ENCODE measurements at regions of chr18 and their contacts with region 1.

Region 1: GRCh38 chr18:11733031-11733430 is 44.0 kb downstream of the GNAL start:
- DNase-seq: peak; percentile 57
- ATAC-seq: peak; percentile 99
- H3K4me3 ChIP-seq: peak overlapping the region; percentile 39
- H3K27ac ChIP-seq: no peak overlapping the region
- H3K4me1 ChIP-seq: no peaks in the 10 kb centered on the region
- H3K27me3 ChIP-seq: peaks cover 27% of the 10 kb centered on the region
- CTCF ChIP-seq: peak; percentile 91
- POLR2A ChIP-seq: no peak
- RAD21 ChIP-seq: peak; percentile 94

Region 2: DNA sequence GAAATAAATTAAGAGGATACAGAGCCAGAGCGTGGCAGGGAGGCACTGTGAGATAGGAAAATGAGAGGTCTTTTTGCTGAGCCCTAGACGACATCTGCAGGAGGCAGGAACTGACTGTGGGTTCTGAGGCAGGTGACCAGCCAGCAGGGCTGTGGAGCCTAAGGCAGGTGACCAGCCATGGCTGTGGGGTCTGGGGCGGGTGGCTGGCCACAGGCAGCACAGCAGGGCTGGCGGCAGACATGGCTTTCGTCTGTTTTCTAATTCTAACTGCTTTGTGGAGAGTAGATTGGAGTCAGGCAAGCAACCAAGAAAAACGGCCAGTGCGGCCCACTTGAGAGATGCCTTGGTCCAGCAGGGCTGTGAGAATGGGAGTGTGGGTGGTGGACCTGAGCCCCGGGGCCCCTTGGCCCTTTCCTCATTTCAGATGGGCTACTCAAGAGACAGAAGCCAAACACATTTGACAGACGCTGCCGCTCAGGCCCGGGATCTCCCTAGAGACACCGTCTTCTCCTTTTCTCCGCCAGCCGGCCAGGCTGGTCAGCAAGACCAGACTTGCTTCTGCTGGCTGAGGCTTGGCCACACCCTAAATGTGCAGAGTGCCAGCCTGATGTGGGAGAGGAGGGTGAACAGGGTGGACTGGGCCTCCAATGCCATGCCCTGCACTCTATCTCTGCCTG is 63.6 kb before region 1 on chr18:
- CTCF ChIA-PET with region 1: no interaction called
- POLR2A ChIA-PET with region 1: no interaction called
- dilution Hi-C with region 1: no loop called
- in situ Hi-C with region 1: no loop called
- intact Hi-C with region 1: no loop called
- DNase-seq: no peak
- ATAC-seq: no peak
- H3K4me3 ChIP-seq: no peak overlapping the region
- H3K27ac ChIP-seq: no peak overlapping the region
- H3K4me1 ChIP-seq: no peaks in the 10 kb centered on the region
- H3K27me3 ChIP-seq: peaks cover 40% of the 10 kb centered on the region
- CTCF ChIP-seq: no peak
- POLR2A ChIP-seq: no peak
- RAD21 ChIP-seq: no peak

Region 3: DNA sequence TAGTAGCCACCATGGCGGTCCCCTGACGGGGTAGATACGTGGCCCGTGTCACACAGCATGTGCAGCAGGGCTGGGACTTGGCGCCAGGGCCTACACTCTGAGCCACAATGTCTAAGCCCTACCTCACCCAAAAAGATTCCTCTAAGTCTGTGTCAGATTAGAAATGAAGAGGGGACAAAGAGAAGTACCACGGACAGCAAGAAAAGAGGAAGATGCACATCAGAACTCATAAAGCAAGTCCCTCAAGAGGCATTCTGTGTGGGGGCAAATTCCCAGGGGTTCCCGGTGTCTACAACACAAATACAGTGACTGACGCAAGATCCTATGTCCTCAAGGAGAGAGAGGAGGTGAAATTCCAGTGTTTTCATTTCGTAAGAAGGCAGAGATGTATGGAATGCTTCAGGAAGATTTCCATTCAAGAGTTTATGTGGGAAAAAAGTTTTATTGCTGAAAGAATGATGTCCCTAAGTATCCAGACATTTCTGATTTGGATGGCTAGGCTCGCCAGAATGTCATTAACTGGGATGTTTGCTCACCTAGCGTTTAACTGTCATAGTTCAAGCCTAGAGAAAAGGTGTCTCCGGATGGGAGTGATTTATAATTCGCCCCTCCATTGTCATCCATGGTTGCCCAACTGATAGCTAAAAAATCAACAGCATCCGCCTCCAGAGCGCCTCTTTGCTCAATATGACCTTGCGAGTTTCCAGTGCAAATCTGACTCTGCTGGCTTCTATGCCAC is 42.6 kb after region 1 on chr18:
- CTCF ChIA-PET with region 1: no interaction called
- POLR2A ChIA-PET with region 1: no interaction called
- dilution Hi-C with region 1: no loop called
- in situ Hi-C with region 1: no loop called
- intact Hi-C with region 1: no loop called
- DNase-seq: no peak
- ATAC-seq: no peak
- H3K4me3 ChIP-seq: no peak overlapping the region
- H3K27ac ChIP-seq: no peak overlapping the region
- H3K4me1 ChIP-seq: no peaks in the 10 kb centered on the region
- H3K27me3 ChIP-seq: peaks cover 13% of the 10 kb centered on the region
- CTCF ChIP-seq: no peak
- POLR2A ChIP-seq: no peak
- RAD21 ChIP-seq: no peak

Region 4: DNA sequence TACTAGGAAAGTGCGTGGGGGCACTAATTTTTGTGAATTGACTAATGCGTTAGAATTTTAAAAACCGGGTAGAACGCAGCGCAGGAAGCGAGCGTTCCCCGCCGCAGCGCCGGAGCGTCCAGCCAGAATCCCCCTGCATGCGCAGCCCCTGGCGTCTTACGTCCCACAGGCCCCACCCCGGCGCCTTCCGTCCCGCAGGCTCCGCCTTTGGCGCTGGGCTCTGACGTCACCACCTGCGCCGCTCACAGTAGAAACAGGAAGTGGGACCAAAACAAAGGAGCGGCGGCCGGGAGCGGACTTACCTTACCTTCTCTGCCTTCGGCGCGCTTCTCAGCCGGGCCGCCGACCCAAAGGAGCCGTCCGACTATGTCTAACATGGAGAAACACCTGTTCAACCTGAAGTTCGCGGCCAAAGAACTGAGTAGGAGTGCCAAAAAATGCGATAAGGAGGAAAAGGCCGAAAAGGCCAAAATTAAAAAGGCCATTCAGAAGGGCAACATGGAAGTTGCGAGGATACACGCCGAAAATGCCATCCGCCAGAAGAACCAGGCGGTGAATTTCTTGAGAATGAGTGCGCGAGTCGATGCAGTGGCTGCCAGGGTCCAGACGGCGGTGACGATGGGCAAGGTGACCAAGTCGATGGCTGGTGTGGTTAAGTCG is 118.2 kb after region 1 on chr18 and contains the start of gene CHMP1B:
- CTCF ChIA-PET with region 1: interaction called, 3 read pairs
- POLR2A ChIA-PET with region 1: no interaction called
- dilution Hi-C with region 1: no loop called
- in situ Hi-C with region 1: no loop called
- intact Hi-C with region 1: loop called (anchors 2 kb)
- DNase-seq: peak; percentile 98
- ATAC-seq: peak; percentile 96
- H3K4me3 ChIP-seq: peak within 1 kb of the TSS; percentile 83
- H3K27ac ChIP-seq: peak within 1 kb of the TSS; percentile 84
- H3K4me1 ChIP-seq: peaks cover 10% of the 10 kb centered on the region
- H3K27me3 ChIP-seq: no peaks in the 10 kb centered on the region
- CTCF ChIP-seq: no peak
- POLR2A ChIP-seq: peak; percentile 95
- RAD21 ChIP-seq: peak; percentile 6; the same call in 1 of the 2 replicates
- total RNA-seq, gene CHMP1B: 39.4 and 69.7 TPM in 2 replicates

Region 5: GRCh38 chr18:11908182-11909060 is 175.4 kb after region 1 on chr18 and contains the start of gene MPPE1:
- CTCF ChIA-PET with region 1: no interaction called
- POLR2A ChIA-PET with region 1: no interaction called
- dilution Hi-C with region 1: no loop called
- in situ Hi-C with region 1: no loop called
- intact Hi-C with region 1: loop called (anchors 2 kb)
- DNase-seq: peak; percentile 83
- ATAC-seq: peak; percentile 93
- H3K4me3 ChIP-seq: peak within 1 kb of the TSS; percentile 86
- H3K27ac ChIP-seq: peak within 1 kb of the TSS; percentile 83
- H3K4me1 ChIP-seq: peaks cover 6% of the 10 kb centered on the region
- H3K27me3 ChIP-seq: no peaks in the 10 kb centered on the region
- CTCF ChIP-seq: no peak
- POLR2A ChIP-seq: peak; percentile 86
- RAD21 ChIP-seq: no peak
- total RNA-seq, gene MPPE1: 13.8 and 22.5 TPM in 2 replicates

Region 6: DNA sequence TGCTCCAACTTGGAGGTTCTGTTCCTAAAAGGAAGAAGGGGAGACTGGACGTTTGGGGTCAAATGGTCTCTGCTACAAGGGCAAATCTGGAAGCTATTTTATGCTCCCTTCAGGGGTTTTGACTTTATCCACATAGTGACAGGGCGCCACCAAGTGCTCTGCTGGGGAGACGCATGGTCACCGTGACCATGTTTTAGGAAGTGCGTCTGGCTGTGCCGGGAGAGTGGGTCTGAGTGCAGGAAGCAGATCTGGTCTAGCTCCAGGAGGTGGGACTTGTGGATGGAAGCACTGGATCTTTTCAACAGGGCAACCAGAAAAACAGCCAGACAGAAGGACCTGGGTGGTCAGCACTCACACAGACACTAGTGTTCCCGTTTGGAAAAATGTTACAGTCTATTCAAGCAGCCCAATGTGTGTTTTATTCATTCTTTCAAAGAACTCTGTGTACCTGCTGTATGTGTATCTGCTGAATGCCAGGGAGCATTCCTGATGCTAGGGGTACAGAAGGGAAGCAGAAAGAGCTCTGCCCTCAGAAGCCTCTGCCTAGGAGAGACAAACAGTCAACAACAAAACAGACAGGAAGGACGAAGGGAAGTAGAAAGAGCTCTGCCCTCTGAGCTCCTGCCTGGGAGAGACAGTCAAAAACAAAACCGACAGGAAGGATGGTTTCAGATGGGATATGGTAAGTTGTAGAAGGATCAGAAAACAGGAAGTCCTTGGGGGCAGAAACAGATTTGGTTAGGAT is 262.6 kb after region 1 on chr18:
- CTCF ChIA-PET with region 1: interaction called, 10 read pairs
- POLR2A ChIA-PET with region 1: no interaction called
- dilution Hi-C with region 1: no loop called
- in situ Hi-C with region 1: no loop called
- intact Hi-C with region 1: loop called (anchors 1 kb)
- DNase-seq: peak; percentile 77
- ATAC-seq: peak; percentile 88
- H3K4me3 ChIP-seq: no peak overlapping the region
- H3K27ac ChIP-seq: no peak overlapping the region
- H3K4me1 ChIP-seq: peaks cover 11% of the 10 kb centered on the region
- H3K27me3 ChIP-seq: no peaks in the 10 kb centered on the region
- CTCF ChIP-seq: peak; percentile 90
- POLR2A ChIP-seq: 0 out of 2 replicates have a peak, but pooled peaks have one; percentile 22
- RAD21 ChIP-seq: peak; percentile 95

Region 7: GRCh38 chr18:12113999-12114646 is 381.1 kb after region 1 on chr18:
- CTCF ChIA-PET with region 1: no interaction called
- POLR2A ChIA-PET with region 1: no interaction called
- dilution Hi-C with region 1: no loop called
- in situ Hi-C with region 1: no loop called
- intact Hi-C with region 1: loop called (anchors 10 kb)
- DNase-seq: no peak
- ATAC-seq: no peak
- H3K4me3 ChIP-seq: no peak overlapping the region
- H3K27ac ChIP-seq: no peak overlapping the region
- H3K4me1 ChIP-seq: no peaks in the 10 kb centered on the region
- H3K27me3 ChIP-seq: no peaks in the 10 kb centered on the region; the same call in 1 of the 2 replicates
- CTCF ChIP-seq: no peak
- POLR2A ChIP-seq: no peak
- RAD21 ChIP-seq: no peak